Sciatic nerve (tissue), 2 donors: ENCODE measurements at regions of chr5 and their contacts with region 1.

Region 1: DNA sequence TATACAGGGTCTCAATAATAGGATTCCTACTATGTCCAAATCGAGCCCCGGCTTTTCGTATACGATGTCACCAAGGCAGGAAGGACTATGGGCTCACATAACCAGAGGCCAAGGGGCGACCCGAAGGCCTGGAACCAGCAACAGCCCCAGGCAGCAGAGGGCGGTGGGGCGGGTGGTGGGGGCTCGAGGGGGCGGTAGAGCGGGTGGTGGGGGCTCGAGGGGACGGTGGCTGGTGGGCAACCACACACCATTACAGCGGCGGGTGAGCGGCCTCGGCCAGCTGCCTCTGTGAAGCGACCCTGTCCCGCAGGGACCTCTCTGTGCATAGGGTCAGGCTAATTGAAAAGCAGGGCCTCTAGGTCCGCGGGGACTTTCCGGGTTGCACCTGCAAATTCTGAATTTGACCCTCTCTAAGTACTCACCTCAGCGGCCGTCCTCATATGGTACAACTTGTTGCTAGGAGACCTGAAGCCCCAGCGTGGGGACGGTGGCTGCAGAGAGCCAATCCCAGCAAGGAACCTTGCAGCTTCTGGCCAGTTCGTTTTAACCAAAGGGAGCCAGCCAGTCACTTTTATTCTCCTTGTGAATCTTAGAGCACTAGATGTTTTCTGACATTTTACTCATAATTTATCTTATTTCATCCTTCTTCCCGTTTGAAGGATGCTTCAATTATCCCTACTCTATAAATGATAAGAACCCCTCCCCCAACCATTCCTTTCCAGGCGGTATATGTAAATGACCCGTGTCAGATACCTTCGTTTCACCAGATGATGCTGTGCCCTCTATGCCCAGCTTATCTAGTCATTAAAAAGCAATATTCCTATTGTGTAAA is at the start of gene NME5:
- DNase-seq: peak; percentile 69
- ATAC-seq: peak; percentile 81
- total RNA-seq, gene NME5: 3.7 TPM

Region 2: DNA sequence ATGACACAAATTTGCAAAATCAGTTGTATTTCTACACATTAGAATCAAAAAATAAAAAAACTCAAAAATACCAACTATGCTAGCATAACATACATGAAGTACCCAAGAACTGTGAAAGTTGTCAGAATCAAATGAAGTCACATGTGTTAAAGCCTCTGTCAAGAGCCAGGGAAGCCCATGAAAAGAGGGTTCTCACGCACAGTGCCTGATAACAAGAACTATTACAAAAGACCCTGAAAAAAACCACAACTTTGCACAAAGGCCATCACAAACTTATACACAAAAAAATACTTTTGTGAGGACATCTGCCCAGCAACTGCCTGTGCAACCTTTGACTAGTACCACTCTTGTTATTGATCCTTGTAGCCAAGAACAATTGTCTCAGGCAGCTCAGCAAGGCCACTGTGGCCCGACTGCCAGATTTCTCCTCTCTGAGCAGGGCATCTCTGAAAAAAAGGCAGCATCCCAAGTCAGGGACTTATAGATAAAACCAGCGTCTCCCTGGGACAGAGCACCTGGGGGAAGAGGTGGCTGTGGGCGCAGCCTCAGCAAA is 356.1 kb before region 1 on chr5:
- intact Hi-C with region 1: loop called (anchors 10 kb)
- DNase-seq: no peak
- ATAC-seq: no peak

Region 3: DNA sequence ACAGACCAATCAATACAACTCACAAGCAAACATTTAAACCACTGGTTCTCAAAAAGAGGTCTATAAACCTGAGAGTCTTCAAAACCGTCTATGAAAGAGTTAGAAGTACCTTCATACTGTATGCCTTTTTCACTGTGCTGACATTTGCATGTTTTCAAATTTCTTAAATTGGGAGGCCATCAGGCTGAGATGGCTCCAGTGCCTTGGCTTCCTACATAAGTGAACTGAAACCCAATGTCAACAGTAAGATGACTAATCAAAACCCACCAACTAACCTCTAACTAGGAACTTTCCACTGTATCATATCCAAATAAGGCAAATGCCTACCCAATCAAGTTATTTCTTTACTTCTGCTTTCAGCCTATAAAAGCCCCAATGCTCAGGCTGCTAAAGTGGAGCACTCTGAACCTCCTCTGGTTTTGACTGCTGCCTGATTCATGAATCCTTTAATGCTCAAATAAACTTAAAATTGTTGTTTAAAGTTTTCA is 141.4 kb before region 1 on chr5:
- intact Hi-C with region 1: no loop called
- DNase-seq: no peak
- ATAC-seq: no peak

Region 4: GRCh38 chr5:138083702-138084101 is 55.5 kb before region 1 on chr5 and contains the start of gene WNT8A:
- intact Hi-C with region 1: loop called (anchors 10 kb)
- DNase-seq: no peak
- ATAC-seq: no peak
- total RNA-seq, gene WNT8A: not detected